ENCODE measurements at regions of chr4 and their contacts with region 1.

Region 1: GRCh38 chr4:110196206-110196870 is 2.1 kb downstream of the ELOVL6 start:
- DNase-seq: peak; percentile 30
- ATAC-seq: peak; percentile 53
- H3K4me3 ChIP-seq: peak overlapping the region; percentile 82
- H3K27ac ChIP-seq: peak overlapping the region; percentile 32
- H3K4me1 ChIP-seq: peaks cover 5% of the 10 kb centered on the region; the same call in 1 of the 2 replicates
- H3K27me3 ChIP-seq: no peaks in the 10 kb centered on the region
- CTCF ChIP-seq: no peak

Region 2: GRCh38 chr4:110005461-110006056 is 190.8 kb before region 1 on chr4:
- CTCF ChIA-PET with region 1: no interaction called
- POLR2A ChIA-PET with region 1: no interaction called
- intact Hi-C with region 1: loop called (anchors 5 kb)
- DNase-seq: peak; percentile 72
- ATAC-seq: peak; percentile 57
- H3K4me3 ChIP-seq: no peak overlapping the region
- H3K27ac ChIP-seq: no peak overlapping the region
- H3K4me1 ChIP-seq: no peaks in the 10 kb centered on the region
- H3K27me3 ChIP-seq: no peaks in the 10 kb centered on the region
- CTCF ChIP-seq: peak; percentile 79

Region 3: DNA sequence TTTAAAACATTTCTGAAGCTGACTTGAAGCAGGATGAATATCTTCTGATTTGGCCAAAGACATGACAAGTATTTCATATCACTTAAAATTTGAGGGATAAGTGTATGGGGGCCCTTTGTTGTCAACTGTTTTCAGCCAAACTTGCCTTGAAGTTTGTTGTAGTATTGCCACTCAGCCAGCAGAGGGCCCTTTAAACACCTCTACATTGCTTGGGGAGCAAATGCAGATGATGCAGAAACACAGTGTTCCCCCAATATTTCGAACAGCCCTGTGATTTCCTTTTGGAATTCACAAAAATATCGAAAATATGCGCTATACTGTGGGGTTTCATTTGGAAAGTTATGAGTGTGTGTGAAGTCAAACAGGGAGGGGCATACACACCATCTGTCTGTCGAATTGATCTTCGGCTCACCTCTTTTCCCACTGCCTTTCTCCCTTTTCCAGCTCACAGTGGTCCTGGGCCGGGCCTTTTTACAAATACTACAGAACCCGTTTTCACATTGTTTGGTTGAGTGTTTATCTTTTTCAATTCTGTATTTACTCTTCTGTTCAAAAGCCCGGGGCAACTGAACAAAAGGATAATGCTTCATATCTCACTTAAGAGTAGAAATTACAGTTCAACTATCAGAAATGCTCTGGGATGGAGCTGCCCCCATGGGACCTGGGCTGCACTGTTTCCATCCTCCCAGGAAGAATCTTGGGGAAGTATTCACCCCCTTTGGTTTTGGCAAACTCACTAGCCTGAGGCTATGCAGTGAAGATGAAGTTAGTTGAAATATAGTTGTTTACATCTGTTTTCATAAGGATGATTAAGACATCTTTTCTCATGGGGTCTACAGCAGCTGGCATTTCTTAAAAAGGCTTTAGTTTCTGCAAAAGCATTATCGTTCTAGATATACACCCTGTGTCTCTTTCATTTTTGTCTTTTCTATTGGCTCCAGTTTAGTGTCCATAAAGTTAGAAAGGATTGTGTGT is 146.1 kb before region 1 on chr4:
- CTCF ChIA-PET with region 1: interaction called, 13 read pairs
- POLR2A ChIA-PET with region 1: no interaction called
- intact Hi-C with region 1: loop called (anchors 5 kb)
- DNase-seq: peak; percentile 55
- ATAC-seq: no peak
- H3K4me3 ChIP-seq: no peak overlapping the region
- H3K27ac ChIP-seq: no peak overlapping the region
- H3K4me1 ChIP-seq: peaks cover 13% of the 10 kb centered on the region
- H3K27me3 ChIP-seq: no peaks in the 10 kb centered on the region
- CTCF ChIP-seq: peak; percentile 80

Region 4: GRCh38 chr4:110055158-110055768 is 141.1 kb before region 1 on chr4:
- CTCF ChIA-PET with region 1: no interaction called
- POLR2A ChIA-PET with region 1: no interaction called
- intact Hi-C with region 1: loop called (anchors 5 kb)
- DNase-seq: peak; percentile 35
- ATAC-seq: no peak
- H3K4me3 ChIP-seq: no peak overlapping the region
- H3K27ac ChIP-seq: no peak overlapping the region
- H3K4me1 ChIP-seq: peaks cover 29% of the 10 kb centered on the region
- H3K27me3 ChIP-seq: no peaks in the 10 kb centered on the region
- CTCF ChIP-seq: no peak

Region 5: DNA sequence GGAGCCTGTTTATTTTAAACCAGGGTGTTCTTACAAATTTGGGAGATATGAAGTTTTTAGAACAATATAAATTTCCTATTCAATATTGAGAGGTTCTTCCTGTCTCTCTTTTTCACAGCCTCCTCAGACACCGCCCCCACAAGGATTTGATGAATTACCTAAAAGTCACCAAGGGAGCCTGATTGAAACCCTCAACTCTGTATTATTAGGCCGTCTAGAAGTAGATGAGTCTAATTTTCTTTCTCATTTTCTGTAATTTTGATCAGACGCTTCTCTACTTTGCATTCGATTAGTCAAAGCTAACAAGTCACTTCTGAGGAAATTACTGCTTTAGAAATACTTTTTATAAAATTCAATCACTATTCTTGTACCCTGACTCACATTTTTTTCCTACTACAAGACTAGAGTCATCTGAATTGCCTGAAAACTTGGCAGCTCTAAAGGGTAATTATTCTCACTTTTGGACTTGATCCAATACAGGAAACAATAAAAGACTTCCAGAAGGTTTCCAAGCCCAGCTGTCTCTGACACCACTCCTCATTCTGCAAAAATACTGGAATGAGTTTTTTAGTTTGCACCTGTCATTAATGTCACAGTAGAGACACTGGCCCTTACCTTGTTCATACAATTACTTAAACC is 109.1 kb before region 1 on chr4:
- CTCF ChIA-PET with region 1: no interaction called
- POLR2A ChIA-PET with region 1: interaction called, 4 read pairs
- intact Hi-C with region 1: loop called (anchors 5 kb)
- DNase-seq: peak; percentile 85
- ATAC-seq: peak; percentile 10
- H3K4me3 ChIP-seq: no peak overlapping the region
- H3K27ac ChIP-seq: peak overlapping the region; percentile 58
- H3K4me1 ChIP-seq: peaks cover 70% of the 10 kb centered on the region
- H3K27me3 ChIP-seq: no peaks in the 10 kb centered on the region
- CTCF ChIP-seq: no peak

Region 6: GRCh38 chr4:110163327-110164069 is 32.8 kb before region 1 on chr4:
- CTCF ChIA-PET with region 1: no interaction called
- POLR2A ChIA-PET with region 1: no interaction called
- intact Hi-C with region 1: loop called (anchors 5 kb)
- DNase-seq: peak; percentile 63
- ATAC-seq: peak; percentile 19; the same call in 1 of the 2 replicates
- H3K4me3 ChIP-seq: no peak overlapping the region
- H3K27ac ChIP-seq: peak overlapping the region; percentile 92
- H3K4me1 ChIP-seq: peaks cover 51% of the 10 kb centered on the region
- H3K27me3 ChIP-seq: no peaks in the 10 kb centered on the region
- CTCF ChIP-seq: 0 out of 2 replicates have a peak, but pooled peaks have one; percentile 23

Region 7: DNA sequence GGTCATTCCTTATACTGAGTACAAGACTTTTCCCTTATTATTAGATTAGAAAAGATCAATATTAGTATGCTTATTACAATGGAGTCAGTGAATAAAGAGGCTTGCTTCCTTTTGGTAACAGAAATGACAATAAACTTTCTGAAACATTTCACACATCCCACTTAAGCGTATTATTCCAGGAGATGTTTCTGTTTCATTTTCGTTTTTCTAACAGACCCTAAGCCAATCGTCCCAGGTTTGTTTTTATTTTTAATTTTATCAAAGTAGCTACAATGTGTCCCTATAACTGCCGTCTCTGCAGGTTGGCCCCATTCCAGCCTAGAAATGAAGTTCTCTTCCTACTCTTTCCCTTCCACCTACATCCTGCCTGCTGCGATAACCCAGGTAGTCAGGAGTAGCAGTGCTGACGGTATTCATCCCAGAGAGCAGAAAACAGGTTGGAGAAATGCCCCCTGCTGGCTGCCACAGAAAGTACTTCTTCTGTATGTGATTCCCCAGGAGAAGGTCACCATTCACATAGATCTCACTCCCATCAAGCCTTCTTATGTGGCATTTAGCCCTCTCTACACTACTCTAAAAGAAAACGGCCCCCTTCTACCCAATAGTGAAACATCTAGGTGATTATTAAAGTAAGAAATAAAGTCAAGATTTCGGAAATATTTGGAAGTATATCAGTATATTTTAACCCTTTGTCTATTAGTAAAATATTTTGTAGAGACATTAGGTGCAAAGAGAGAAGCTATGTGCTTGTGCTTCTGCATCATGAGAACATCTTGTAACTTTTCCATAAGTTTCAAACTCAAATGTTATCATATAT is 320.0 kb after region 1 on chr4:
- CTCF ChIA-PET with region 1: no interaction called
- POLR2A ChIA-PET with region 1: no interaction called
- intact Hi-C with region 1: loop called (anchors 5 kb)
- DNase-seq: peak; percentile 78
- ATAC-seq: peak; percentile 97
- H3K4me3 ChIP-seq: peak overlapping the region; percentile 76
- H3K27ac ChIP-seq: no peak overlapping the region
- H3K4me1 ChIP-seq: no peaks in the 10 kb centered on the region
- H3K27me3 ChIP-seq: no peaks in the 10 kb centered on the region
- CTCF ChIP-seq: peak; percentile 78

Region 8: GRCh38 chr4:110970642-110971041 is 774.3 kb after region 1 on chr4:
- CTCF ChIA-PET with region 1: no interaction called
- POLR2A ChIA-PET with region 1: no interaction called
- intact Hi-C with region 1: no loop called
- DNase-seq: peak; percentile 53
- ATAC-seq: no peak
- H3K4me3 ChIP-seq: no peak overlapping the region
- H3K27ac ChIP-seq: no peak overlapping the region
- H3K4me1 ChIP-seq: no peaks in the 10 kb centered on the region
- H3K27me3 ChIP-seq: peaks cover 13% of the 10 kb centered on the region
- CTCF ChIP-seq: peak; percentile 64